Tibial artery (tissue), 4 donors: ENCODE measurements at regions of chr17 and their contacts with region 1.

Region 1: DNA sequence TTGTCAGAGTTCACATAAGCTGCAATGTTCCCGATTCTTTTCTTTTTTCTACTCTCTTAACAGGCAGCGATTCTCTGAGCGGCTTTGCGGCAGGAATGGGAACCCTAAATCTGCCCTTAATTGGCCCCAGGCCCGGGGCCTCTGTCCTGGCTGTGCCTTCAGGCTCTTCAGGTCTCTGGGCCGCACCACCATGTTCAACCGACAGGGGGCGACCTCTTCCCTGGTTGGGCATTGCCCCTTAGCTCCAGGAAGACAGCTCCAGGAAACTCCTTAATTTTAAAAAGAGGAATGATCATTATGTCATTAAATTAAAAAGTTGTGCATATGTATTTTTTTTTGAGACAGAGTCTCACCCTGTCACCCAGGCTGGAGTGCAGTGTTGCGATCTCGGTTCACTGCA is 20.3 kb downstream of the CACNG5 start:
- DNase-seq: no peak
- H3K4me3 ChIP-seq: no peak overlapping the region
- H3K27ac ChIP-seq: no peak overlapping the region
- H3K4me1 ChIP-seq: peaks cover 0 to 8% (median 5%) of the 10 kb centered on the region in 4 donors
- H3K27me3 ChIP-seq: no peaks in the 10 kb centered on the region
- CTCF ChIP-seq: no peak

Region 2: DNA sequence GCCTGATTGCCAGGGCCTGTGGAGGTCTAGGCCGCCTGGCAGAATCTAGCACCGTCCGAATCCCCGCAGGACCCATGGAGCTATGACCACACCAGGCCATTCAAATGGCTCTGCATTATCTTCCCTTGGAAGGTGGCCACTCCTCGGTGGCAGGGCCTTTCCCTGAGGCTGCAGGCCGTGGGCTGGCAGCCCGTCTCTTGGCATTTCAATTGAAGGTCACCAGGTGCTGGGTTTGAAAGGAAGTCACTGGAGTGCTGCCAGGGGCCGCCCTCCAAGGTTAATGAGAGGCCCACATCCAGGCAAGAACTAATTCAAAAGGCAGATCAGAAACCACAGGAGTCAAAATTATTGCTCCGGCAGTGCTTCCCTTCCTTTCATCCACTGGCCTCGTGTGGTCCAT is 48.0 kb before region 1 on chr17:
- intact Hi-C with region 1: loop called (anchors 5 kb)
- DNase-seq: no peak
- H3K4me3 ChIP-seq: no peak overlapping the region
- H3K27ac ChIP-seq: no peak overlapping the region
- H3K4me1 ChIP-seq: no peaks in the 10 kb centered on the region
- H3K27me3 ChIP-seq: no peaks in the 10 kb centered on the region
- CTCF ChIP-seq: no peak